AG04449 (cell line): ENCODE measurements at regions of chr15 and their contacts with region 1.

Region 1: DNA sequence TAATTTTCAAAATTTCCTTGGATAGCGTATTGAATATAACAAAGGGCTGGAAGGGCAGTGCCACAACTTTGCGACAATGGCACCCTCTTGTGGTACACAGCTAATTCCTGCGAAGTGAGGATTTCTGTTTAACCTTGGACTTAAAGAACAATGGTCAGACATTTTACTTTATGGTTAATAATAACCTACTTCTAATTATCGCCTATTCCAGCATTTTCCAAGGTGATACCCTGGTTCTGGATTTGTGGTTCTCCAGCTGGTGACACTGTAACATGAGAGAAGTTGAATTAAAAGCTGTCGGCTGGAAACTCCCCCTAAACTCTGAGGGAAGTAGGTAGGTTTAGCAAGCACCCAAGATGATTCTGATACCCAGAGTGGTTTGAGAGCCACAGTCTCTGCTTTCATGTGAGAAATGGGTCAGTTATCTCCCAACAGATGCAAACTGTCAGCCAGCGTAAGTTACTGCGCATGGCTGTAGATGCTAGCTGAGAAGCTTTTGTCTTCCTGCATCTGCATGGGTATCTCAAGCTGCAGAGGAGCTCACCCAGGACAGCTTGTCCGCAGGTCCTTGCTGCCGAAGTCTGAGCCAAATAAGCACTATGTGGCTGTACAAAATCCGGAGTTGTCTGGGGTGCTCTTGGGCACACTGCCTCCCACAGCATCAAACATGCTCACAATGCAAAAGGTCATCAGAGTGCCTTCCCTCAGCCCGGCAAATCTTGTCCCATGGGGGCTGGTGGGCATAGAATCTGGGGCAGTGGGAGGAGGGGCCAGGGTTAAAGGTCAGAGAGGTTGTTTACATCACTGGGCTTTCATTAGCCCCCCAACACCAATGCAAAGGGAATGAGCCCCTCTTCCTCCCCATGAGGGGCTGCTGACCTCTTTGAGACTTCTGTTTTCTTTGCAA is 6.6 kb upstream of the CHSY1 start:
- DNase-seq: no peak
- H3K4me3 ChIP-seq: no peak overlapping the region
- CTCF ChIP-seq: peak; percentile 62

Region 2: GRCh38 chr15:101014921-101015841 is 243.3 kb before region 1 on chr15:
- CTCF ChIA-PET with region 1: interaction called, 261 read pairs
- POLR2A ChIA-PET with region 1: no interaction called
- DNase-seq: no peak
- H3K4me3 ChIP-seq: no peak overlapping the region
- CTCF ChIP-seq: peak; percentile 83

Region 3: GRCh38 chr15:101024073-101024695 is 234.3 kb before region 1 on chr15:
- CTCF ChIA-PET with region 1: interaction called, 20 read pairs
- POLR2A ChIA-PET with region 1: no interaction called
- DNase-seq: no peak
- H3K4me3 ChIP-seq: no peak overlapping the region
- CTCF ChIP-seq: no peak

Region 4: DNA sequence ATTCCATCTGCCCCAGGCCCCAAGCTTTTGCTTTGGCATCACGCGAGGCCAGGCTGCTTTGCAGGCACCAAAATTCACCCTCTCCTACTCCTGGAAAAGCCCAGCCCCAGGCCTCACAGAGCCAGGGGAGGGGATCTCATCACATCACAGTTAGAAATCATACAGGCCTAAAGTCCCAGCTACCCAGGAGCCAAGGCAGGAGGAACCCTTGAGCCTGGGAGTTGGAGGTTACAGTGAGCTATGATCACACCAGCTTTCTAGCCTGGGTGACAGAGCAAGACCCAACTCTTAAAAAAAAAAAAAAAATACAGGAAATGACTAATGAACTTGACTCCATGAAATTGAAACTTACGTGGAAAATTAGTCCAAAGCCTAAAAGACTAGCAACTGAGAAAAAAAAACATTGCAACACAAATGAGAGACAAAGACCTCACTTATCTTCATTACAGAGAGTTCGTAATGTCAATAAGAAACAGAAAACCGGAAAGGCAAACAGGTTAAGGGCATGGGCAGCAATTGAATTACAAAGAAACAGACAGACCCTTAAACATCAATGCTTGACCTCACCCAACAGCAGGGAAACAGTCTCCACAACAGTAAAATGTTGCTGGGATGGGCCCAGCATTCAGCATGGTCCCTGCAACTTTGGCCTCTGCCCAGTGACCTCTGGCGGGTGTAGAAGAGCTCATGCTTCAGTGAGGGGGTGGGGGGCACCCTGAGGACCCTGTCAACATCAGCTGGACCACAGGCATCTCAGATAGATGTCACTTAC is 187.8 kb before region 1 on chr15:
- CTCF ChIA-PET with region 1: interaction called, 18 read pairs
- POLR2A ChIA-PET with region 1: no interaction called
- DNase-seq: peak; percentile 52
- H3K4me3 ChIP-seq: no peak overlapping the region
- CTCF ChIP-seq: no peak

Region 5: DNA sequence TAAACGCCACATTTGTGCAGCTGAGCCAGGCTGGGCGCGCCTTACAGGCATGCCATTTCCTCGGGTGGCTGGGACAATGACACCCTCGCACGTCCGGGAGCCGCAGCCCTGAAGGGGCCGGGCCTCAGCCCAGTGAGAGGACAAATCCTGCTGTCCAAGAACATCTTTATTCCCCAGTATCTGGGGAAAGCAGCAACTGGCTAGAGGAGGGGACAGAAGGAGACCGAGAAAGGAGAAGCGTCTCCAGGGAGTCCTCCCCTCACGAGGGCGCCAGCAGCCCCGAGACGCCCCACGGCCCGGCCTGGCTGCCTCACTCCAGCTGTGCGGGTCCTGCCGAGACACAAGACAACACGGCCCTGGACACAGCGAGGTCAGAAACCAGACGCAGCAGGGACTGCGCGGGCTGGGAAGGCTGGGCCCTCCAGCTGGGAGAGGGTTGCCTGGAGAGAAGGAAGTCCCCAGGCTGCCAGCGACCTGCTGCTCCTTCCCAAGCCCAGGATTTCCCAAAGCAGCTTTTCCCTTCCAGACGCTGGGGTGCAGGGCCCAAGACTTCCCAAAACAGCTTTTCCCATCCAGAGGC is 136.9 kb before region 1 on chr15:
- CTCF ChIA-PET with region 1: interaction called, 23 read pairs
- POLR2A ChIA-PET with region 1: interaction called, 3 read pairs
- DNase-seq: no peak
- H3K4me3 ChIP-seq: peak overlapping the region; percentile 38
- CTCF ChIP-seq: peak; percentile 58

Region 6: GRCh38 chr15:101179341-101180153 is 78.9 kb before region 1 on chr15:
- CTCF ChIA-PET with region 1: no interaction called
- POLR2A ChIA-PET with region 1: no interaction called
- DNase-seq: peak; percentile 70
- H3K4me3 ChIP-seq: no peak overlapping the region
- CTCF ChIP-seq: no peak

Region 7: DNA sequence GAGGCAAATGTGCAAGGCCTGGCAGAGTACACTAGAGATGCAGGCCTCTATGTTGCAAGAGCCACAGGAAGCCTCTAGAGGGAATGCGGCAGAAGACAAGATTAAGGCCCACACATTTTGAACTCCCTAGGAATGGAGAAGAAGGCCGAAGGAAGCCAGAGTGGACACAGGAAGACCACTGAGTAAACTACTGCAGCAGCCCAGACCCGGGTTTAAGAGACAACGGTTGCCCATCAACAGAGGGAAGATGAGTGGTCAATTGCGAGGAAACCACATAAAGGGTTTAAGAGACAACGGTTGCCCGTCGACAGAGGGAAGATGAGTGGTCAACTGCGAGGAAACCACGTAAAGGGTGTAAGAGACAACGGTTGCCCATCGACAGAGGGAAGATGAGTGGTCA is 21.2 kb before region 1 on chr15:
- CTCF ChIA-PET with region 1: no interaction called
- POLR2A ChIA-PET with region 1: no interaction called
- DNase-seq: no peak
- H3K4me3 ChIP-seq: no peak overlapping the region
- CTCF ChIP-seq: no peak